ENCODE measurements at regions of chr11 and their contacts with region 1.

Region 1: GRCh38 chr11:112644410-112645131 is 316.6 kb upstream of the NCAM1 start:
- DNase-seq: no peak
- ATAC-seq: no peak
- H3K4me3 ChIP-seq: no peak overlapping the region
- H3K27ac ChIP-seq: no peak overlapping the region
- H3K4me1 ChIP-seq: peaks cover 0 to 2% of the 10 kb centered on the region in 2 donors
- H3K27me3 ChIP-seq: no peaks in the 10 kb centered on the region
- CTCF ChIP-seq: no peak
- POLR2A ChIP-seq: no peak

Region 2: GRCh38 chr11:112599856-112600533 is 44.6 kb before region 1 on chr11:
- in situ Hi-C with region 1: no loop called
- intact Hi-C with region 1: loop called (anchors 5 kb)
- DNase-seq: no peak
- ATAC-seq: peak; percentile 87 to 92
- H3K4me3 ChIP-seq: no peak overlapping the region
- H3K27ac ChIP-seq: peak overlapping the region in 2 of 4 donors; percentile 39 to 82
- H3K4me1 ChIP-seq: peaks cover 7 to 24% of the 10 kb centered on the region in 2 donors
- H3K27me3 ChIP-seq: no peaks in the 10 kb centered on the region
- CTCF ChIP-seq: no peak
- POLR2A ChIP-seq: no peak